Breast epithelium (tissue), 4 donors: ENCODE measurements at regions of chr5 and their contacts with region 1.

Region 1: GRCh38 chr5:19880458-19881436 is 107.3 kb downstream of the CDH18 start:
- DNase-seq: no peak
- H3K4me3 ChIP-seq: no peak overlapping the region
- H3K27ac ChIP-seq: no peak overlapping the region
- H3K4me1 ChIP-seq: no peaks in the 10 kb centered on the region
- H3K27me3 ChIP-seq: no peaks in the 10 kb centered on the region
- CTCF ChIP-seq: no peak
- POLR2A ChIP-seq: no peak

Region 2: GRCh38 chr5:19564036-19564435 is 316.7 kb before region 1 on chr5:
- intact Hi-C with region 1: loop called (anchors 5 kb)
- DNase-seq: no peak
- H3K4me3 ChIP-seq: no peak overlapping the region
- H3K27ac ChIP-seq: no peak overlapping the region
- H3K4me1 ChIP-seq: no peaks in the 10 kb centered on the region
- H3K27me3 ChIP-seq: no peaks in the 10 kb centered on the region
- CTCF ChIP-seq: no peak
- POLR2A ChIP-seq: no peak

Region 3: DNA sequence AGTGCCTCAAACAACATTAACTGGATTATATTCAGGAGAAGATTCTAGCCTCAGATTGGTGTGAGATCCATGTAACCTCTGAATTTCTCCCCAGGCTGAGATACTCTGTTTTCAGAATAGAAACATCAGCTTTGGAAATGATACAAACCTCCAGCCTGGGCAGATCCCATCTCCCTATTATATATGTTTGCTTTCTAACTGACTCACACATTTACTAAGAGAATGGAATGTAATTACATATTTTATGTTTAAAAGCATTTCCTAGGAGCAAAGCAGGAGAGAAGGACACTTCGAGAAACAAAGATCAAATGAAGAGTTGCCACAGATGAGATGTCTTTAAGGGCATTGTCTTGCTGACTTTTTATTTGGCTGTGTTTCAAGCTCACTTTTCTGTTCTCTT is 10.9 kb after region 1 on chr5:
- intact Hi-C with region 1: no loop called
- DNase-seq: no peak
- H3K4me3 ChIP-seq: no peak overlapping the region
- H3K27ac ChIP-seq: no peak overlapping the region
- H3K4me1 ChIP-seq: no peaks in the 10 kb centered on the region
- H3K27me3 ChIP-seq: no peaks in the 10 kb centered on the region
- CTCF ChIP-seq: no peak
- POLR2A ChIP-seq: no peak